Lower leg skin (tissue), 4 donors: ENCODE measurements at regions of chr13 and their contacts with region 1.

Region 1: DNA sequence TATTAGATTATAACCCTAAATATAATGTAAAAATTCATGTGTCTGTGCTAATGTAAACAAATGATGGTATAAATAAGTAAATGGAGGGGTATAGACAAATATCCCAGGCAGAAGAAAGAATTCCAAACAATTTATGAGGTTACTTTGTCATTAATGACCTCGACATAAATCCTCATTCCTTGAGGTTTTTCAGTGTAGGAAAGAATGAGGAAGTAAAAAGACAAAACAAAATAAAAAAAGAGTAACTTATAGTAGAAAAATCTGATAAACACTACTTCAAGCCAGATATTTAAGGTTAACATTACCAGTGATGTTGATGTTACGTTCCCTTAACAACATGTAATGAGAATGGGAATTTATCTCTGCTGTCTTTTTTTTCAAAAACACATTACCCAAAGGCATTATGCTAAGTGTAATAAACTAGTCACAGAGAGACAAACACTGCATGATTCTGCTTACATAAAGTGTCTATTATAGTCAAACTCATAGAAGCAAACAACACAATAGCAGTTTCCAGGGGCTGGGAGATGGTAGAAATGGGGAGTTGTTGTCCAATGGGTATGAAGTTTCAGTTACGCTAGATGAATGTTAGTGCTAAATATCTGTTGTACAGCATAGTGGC is 935.1 kb downstream of the SLITRK1 start:
- DNase-seq: no peak
- H3K4me3 ChIP-seq: no peak overlapping the region
- CTCF ChIP-seq: no peak
- POLR2A ChIP-seq: no peak

Region 2: GRCh38 chr13:82257790-82258507 is 689.3 kb before region 1 on chr13:
- intact Hi-C with region 1: loop called (anchors 5 kb)
- DNase-seq: no peak
- H3K4me3 ChIP-seq: no peak overlapping the region
- CTCF ChIP-seq: no peak
- POLR2A ChIP-seq: no peak

Region 3: DNA sequence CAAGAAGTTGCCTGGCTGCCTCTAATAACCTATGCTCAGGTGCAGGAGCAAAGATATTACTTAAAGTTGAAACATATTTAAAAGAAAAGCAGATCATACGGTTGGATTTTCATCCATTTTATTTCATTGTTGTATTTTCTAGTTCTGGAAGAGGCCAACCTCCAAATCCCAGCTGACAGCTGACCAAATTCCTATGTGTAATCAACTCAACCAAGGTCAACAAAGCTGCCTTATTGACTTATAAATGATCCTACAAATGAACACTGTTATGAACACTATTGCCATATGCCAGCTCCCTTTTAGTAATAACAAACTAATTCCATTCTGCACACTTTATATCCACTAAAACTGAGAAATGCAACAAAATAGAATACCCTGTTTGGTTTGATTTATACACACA is 602.3 kb before region 1 on chr13:
- intact Hi-C with region 1: no loop called
- DNase-seq: no peak
- H3K4me3 ChIP-seq: no peak overlapping the region
- CTCF ChIP-seq: no peak
- POLR2A ChIP-seq: no peak

Region 4: DNA sequence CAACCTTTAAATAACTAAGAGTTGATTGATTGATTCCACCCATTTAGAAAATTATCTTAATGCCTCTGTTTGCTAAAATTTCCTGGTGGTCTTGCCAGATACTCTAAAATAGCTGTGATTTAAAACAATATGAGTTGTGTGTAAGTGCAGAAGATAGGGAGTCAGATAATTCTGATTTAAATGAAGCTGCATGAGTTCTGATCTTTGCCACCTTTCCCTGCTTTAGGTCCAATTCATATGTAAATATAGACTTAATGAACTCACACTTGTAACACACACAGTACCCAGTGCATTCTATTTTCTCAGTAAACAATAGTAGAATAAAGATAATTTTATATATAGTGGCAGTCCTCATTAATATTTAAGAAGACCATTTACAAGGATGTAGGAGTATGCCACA is 46.8 kb before region 1 on chr13:
- intact Hi-C with region 1: no loop called
- DNase-seq: no peak
- H3K4me3 ChIP-seq: no peak overlapping the region
- CTCF ChIP-seq: no peak
- POLR2A ChIP-seq: no peak